AG04450 (cell line): ENCODE measurements at regions of chr16 and their contacts with region 1.

Region 1: GRCh38 chr16:50806099-50807062 is 64.5 kb downstream of the CYLD start:
- DNase-seq: peak; percentile 77
- H3K4me3 ChIP-seq: peak overlapping the region; percentile 60
- H3K27ac ChIP-seq: peak overlapping the region; percentile 48
- H3K27me3 ChIP-seq: no peaks in the 10 kb centered on the region
- CTCF ChIP-seq: peak; percentile 75

Region 2: GRCh38 chr16:50326949-50327402 is 479.4 kb before region 1 on chr16:
- CTCF ChIA-PET with region 1: interaction called, 26 read pairs
- POLR2A ChIA-PET with region 1: no interaction called
- DNase-seq: no peak
- H3K4me3 ChIP-seq: no peak overlapping the region
- H3K27ac ChIP-seq: no peak overlapping the region
- H3K27me3 ChIP-seq: no peaks in the 10 kb centered on the region
- CTCF ChIP-seq: peak; percentile 58

Region 3: GRCh38 chr16:50611332-50611934 is 194.9 kb before region 1 on chr16:
- CTCF ChIA-PET with region 1: interaction called, 11 read pairs
- POLR2A ChIA-PET with region 1: no interaction called
- DNase-seq: no peak
- H3K4me3 ChIP-seq: no peak overlapping the region
- H3K27ac ChIP-seq: no peak overlapping the region
- H3K27me3 ChIP-seq: peaks cover 40% of the 10 kb centered on the region
- CTCF ChIP-seq: 0 out of 2 replicates have a peak, but pooled peaks have one; percentile 7

Region 4: GRCh38 chr16:50735629-50736122 is 70.7 kb before region 1 on chr16:
- CTCF ChIA-PET with region 1: interaction called, 28 read pairs
- POLR2A ChIA-PET with region 1: no interaction called
- DNase-seq: no peak
- H3K4me3 ChIP-seq: no peak overlapping the region
- H3K27ac ChIP-seq: no peak overlapping the region
- H3K27me3 ChIP-seq: peaks cover 12% of the 10 kb centered on the region
- CTCF ChIP-seq: no peak

Region 5: GRCh38 chr16:50776037-50776436 is 30.3 kb before region 1 on chr16:
- CTCF ChIA-PET with region 1: interaction called, 91 read pairs
- POLR2A ChIA-PET with region 1: no interaction called
- DNase-seq: no peak
- H3K4me3 ChIP-seq: no peak overlapping the region
- H3K27ac ChIP-seq: no peak overlapping the region
- H3K27me3 ChIP-seq: no peaks in the 10 kb centered on the region
- CTCF ChIP-seq: no peak

Region 6: DNA sequence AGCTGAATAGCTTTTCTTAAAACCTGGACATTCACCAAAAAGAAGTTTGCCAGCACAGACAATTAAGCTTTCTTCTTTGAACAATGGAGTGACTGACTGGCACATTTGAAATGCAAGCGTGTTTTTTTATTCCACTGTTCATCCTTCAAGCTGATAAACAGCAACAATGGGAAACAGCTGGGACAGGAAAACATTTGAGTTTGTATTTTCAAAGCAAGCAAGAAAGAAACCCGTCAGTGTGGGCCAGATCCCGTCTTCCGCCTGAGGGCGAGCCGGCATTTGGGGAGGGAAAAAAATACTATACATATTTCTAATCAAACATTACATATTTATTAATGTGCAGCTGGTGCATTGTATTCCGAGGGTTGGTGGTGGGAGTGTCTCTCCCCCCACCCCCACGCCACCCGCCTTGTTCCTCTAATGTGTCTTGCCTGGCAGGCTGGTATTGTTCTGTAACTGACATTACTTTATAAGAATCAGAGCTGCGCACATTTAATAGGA is 29.8 kb after region 1 on chr16:
- CTCF ChIA-PET with region 1: interaction called, 16 read pairs
- POLR2A ChIA-PET with region 1: no interaction called
- DNase-seq: no peak
- H3K4me3 ChIP-seq: no peak overlapping the region
- H3K27ac ChIP-seq: no peak overlapping the region
- H3K27me3 ChIP-seq: peaks cover 12% of the 10 kb centered on the region
- CTCF ChIP-seq: no peak